PC-9 (cell line): ENCODE measurements at regions of chr21 and their contacts with region 1.

Region 1: GRCh38 chr21:37009740-37010341 is 3.3 kb downstream of the RIPPLY3 start:
- DNase-seq: peak; percentile 63 to 83
- H3K4me3 ChIP-seq: peak overlapping the region; percentile 44; the same call in 1 of the 2 replicates
- H3K27ac ChIP-seq: no peak overlapping the region
- H3K4me1 ChIP-seq: no peaks in the 10 kb centered on the region
- H3K27me3 ChIP-seq: no peaks in the 10 kb centered on the region
- CTCF ChIP-seq: peak; percentile 76

Region 2: GRCh38 chr21:36149788-36150711 is 859.8 kb before region 1 on chr21:
- CTCF ChIA-PET with region 1: no interaction called
- POLR2A ChIA-PET with region 1: interaction called, 12 read pairs
- intact Hi-C with region 1: no loop called
- DNase-seq: no peak
- H3K4me3 ChIP-seq: no peak overlapping the region
- H3K27ac ChIP-seq: no peak overlapping the region
- H3K4me1 ChIP-seq: peaks cover 2% of the 10 kb centered on the region
- H3K27me3 ChIP-seq: no peaks in the 10 kb centered on the region
- CTCF ChIP-seq: no peak

Region 3: DNA sequence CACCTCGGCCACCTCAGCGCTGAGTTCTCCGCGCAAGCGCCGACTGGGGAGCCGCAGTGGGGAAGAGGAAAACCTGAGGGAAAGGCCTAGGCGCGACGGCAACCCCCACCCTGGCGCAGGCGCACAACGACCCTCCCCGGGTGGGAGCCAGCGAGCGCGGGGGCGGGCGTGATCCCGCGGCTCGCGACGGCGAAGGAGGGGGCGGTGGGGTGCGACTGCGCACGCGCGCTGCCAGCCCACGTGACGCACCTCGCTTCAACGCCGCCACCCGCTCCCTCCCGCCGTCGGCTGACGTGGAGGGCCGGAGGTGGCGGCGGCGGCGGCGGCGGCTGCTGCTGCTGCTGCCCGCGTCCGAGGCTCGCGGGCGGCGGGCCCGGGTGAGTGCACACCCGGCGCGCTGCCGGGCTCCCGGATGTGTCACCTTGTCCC is 63.2 kb after region 1 on chr21 and contains the starts of genes PIGP and TTC3:
- CTCF ChIA-PET with region 1: no interaction called
- POLR2A ChIA-PET with region 1: no interaction called
- intact Hi-C with region 1: loop called (anchors 2 kb)
- DNase-seq: peak; percentile 62 to 94
- H3K4me3 ChIP-seq: peak within 1 kb of the TSS; percentile 88
- H3K27ac ChIP-seq: peak within 1 kb of the TSS; percentile 84
- H3K4me1 ChIP-seq: peaks cover 17% of the 10 kb centered on the region
- H3K27me3 ChIP-seq: no peaks in the 10 kb centered on the region
- CTCF ChIP-seq: no peak
- total RNA-seq, gene PIGP: 10.1 and 20.9 TPM in 2 replicates
- total RNA-seq, gene TTC3: 77.6 and 84.9 TPM in 2 replicates